ENCODE measurements at regions of chr11 and their contacts with region 1.

Region 1: GRCh38 chr11:90288212-90288821 is 65.5 kb upstream of the CHORDC1 start:
- DNase-seq: no peak
- ATAC-seq: no peak
- H3K4me3 ChIP-seq: no peak overlapping the region
- H3K27ac ChIP-seq: no peak overlapping the region
- H3K4me1 ChIP-seq: no peaks in the 10 kb centered on the region
- H3K27me3 ChIP-seq: no peaks in the 10 kb centered on the region

Region 2: GRCh38 chr11:90434858-90435257 is 146.5 kb after region 1 on chr11:
- intact Hi-C with region 1: loop called in 1 of 4 experiments (anchors 10 kb)
- DNase-seq: no peak
- ATAC-seq: no peak
- H3K4me3 ChIP-seq: no peak overlapping the region
- H3K27ac ChIP-seq: no peak overlapping the region
- H3K4me1 ChIP-seq: no peaks in the 10 kb centered on the region
- H3K27me3 ChIP-seq: no peaks in the 10 kb centered on the region

Region 3: DNA sequence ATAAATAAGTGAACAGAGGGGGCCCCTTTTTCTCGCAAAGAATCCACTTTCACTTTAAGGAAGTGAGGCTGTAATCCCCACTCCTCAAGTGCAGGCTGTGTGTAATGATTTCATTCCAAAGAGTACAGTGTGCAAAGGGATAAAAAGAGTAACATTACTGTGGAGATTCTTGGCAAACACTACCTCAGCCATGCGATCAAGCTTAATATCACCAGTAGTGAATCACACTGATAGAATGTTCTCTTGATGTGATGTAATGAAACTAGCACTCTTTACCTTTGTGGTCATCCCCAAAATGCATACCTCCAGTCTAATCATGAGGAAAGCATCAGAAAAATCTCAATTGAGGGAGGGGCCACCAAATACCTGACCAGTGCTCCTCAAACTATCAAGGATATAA is 180.6 kb after region 1 on chr11:
- intact Hi-C with region 1: loop called in 1 of 4 experiments (anchors 10 kb)
- DNase-seq: no peak
- ATAC-seq: peak; percentile 60 to 64
- H3K4me3 ChIP-seq: no peak overlapping the region
- H3K27ac ChIP-seq: no peak overlapping the region
- H3K4me1 ChIP-seq: no peaks in the 10 kb centered on the region
- H3K27me3 ChIP-seq: no peaks in the 10 kb centered on the region